Dorsolateral prefrontal cortex (tissue), 120 donors: ENCODE measurements at regions of chr2 and their contacts with region 1.

Region 1: GRCh38 chr2:241355983-241356870 is at the start of gene FARP2:
- DNase-seq: peak; percentile 99 to 100 (median 100)
- H3K4me3 ChIP-seq: peak within 1 kb of the TSS; percentile 71 to 99 (median 91)
- H3K27ac ChIP-seq: peak within 1 kb of the TSS in 57 of 59 donors; percentile 29 to 90 (median 80)
- H3K27me3 ChIP-seq: no peaks in the 10 kb centered on the region
- CTCF ChIP-seq: peak in 6 of 56 donors; percentile 3 to 28 (median 10)
- total RNA-seq, gene FARP2: 39.8 to 107 (median 67.7) TPM

Region 2: GRCh38 chr2:241412144-241412543 is 55.9 kb after region 1 on chr2:
- intact Hi-C with region 1: loop called in 1 of 2 experiments (anchors 10 kb)
- DNase-seq: no peak
- H3K4me3 ChIP-seq: no peak overlapping the region
- H3K27ac ChIP-seq: peak overlapping the region in 22 of 59 donors; percentile 17 to 95 (median 84)
- H3K27me3 ChIP-seq: no peaks in the 10 kb centered on the region
- CTCF ChIP-seq: no peak

Region 3: GRCh38 chr2:241508240-241509154 is 152.3 kb after region 1 on chr2 and contains the start of gene STK25:
- intact Hi-C with region 1: loop called in 1 of 2 experiments (anchors 5 kb)
- DNase-seq: peak; percentile 93 to 99 (median 97)
- H3K4me3 ChIP-seq: peak within 1 kb of the TSS; percentile 56 to 100 (median 90)
- H3K27ac ChIP-seq: peak within 1 kb of the TSS; percentile 66 to 97 (median 90)
- H3K27me3 ChIP-seq: no peaks in the 10 kb centered on the region
- CTCF ChIP-seq: peak in 23 of 56 donors; percentile 6 to 54 (median 29)
- total RNA-seq, gene STK25: 138 to 233 (median 178) TPM

Region 4: DNA sequence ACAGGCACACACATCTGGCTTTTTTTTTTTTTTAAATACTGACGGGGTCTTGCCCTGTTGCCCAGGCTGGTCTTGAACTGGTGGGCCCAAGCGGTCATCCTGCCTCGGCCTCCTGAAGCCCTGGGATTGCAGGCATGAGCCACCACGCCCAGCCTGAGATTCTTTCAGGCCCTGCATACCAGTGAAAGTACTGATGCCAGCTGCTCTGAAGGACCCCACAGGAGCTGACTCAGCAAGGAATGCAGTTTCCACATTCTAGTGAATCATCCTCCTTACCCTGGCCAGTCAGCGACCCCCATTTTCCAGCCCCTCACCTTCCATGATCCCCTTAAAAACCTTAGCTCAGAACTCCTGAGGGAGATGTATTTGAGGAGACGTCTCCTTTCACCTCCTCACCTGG is 336.2 kb after region 1 on chr2:
- intact Hi-C with region 1: no loop called
- DNase-seq: no peak
- H3K4me3 ChIP-seq: no peak overlapping the region
- H3K27ac ChIP-seq: no peak overlapping the region
- H3K27me3 ChIP-seq: no peaks in the 10 kb centered on the region
- CTCF ChIP-seq: no peak